Activated T-helper 1 cell treated with anti-CD3 and anti-CD28 coated beads, Interleukin-12 subunit alpha, Interleukin-12 subunit beta, Interleukin-2, Interleukin-4 antibody, amounts not matched to agents 30 ng/mL and 10 ng/mL and 1 ng/mL, durations not matched to agents 14 hours and 24 hours and 36 hours (primary cell): ENCODE measurements at regions of chr7 and their contacts with region 1.

Region 1: DNA sequence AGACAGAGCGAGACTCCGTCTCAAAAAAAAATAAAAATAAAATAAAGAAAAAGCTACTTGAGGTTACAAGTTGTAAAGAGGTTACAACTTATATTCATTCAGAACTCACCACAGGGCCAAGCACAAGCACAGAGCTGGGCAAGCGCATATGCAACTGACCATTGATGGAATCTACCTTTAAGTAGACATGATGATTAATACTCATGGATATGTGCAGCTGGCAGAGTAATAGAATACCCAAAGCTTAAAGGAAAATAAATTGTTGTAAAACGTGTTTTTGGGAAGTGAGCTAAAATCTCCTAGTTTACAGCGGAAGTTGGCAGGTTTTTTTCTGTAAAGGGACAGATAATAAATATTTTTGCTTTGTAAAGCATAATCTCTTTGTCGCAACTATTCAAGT is 111.6 kb downstream of the TMEM168 start:
- DNase-seq: no peak
- H3K4me3 Mint-ChIP-seq: no peak overlapping the region
- H3K27ac Mint-ChIP-seq: no peak overlapping the region
- H3K4me1 Mint-ChIP-seq: no peaks in the 10 kb centered on the region
- H3K27me3 Mint-ChIP-seq: peaks cover 3% of the 10 kb centered on the region

Region 2: GRCh38 chr7:112610636-112611035 is 68.0 kb before region 1 on chr7:
- intact Hi-C with region 1: no loop called
- DNase-seq: no peak
- H3K4me3 Mint-ChIP-seq: no peak overlapping the region
- H3K27ac Mint-ChIP-seq: no peak overlapping the region
- H3K4me1 Mint-ChIP-seq: no peaks in the 10 kb centered on the region
- H3K27me3 Mint-ChIP-seq: peaks cover 4% of the 10 kb centered on the region

Region 3: GRCh38 chr7:112701451-112701850 is 22.8 kb after region 1 on chr7:
- intact Hi-C with region 1: loop called (anchors 2 kb)
- DNase-seq: no peak
- H3K4me3 Mint-ChIP-seq: no peak overlapping the region
- H3K27ac Mint-ChIP-seq: no peak overlapping the region
- H3K4me1 Mint-ChIP-seq: no peaks in the 10 kb centered on the region
- H3K27me3 Mint-ChIP-seq: peaks cover 4% of the 10 kb centered on the region